K562 (cell line): ENCODE measurements at regions of chr17 and their contacts with region 1.

Region 1: GRCh38 chr17:55324296-55324978 is 59.7 kb downstream of the HLF start:
- DNase-seq: peak in 1 of 4 experiments; percentile 41
- ATAC-seq: peak; percentile 61; the same call in 2 of the 3 replicates
- H3K4me3 ChIP-seq: no peak overlapping the region
- H3K27ac ChIP-seq: no peak overlapping the region
- H3K4me1 ChIP-seq: peaks cover 4 to 14% of the 10 kb centered on the region in 2 experiments
- H3K27me3 ChIP-seq: no peaks in the 10 kb centered on the region
- CTCF ChIP-seq: peak in 2 of 3 experiments; percentile 37 to 40; a peak in 2 of 6 replicates
- EP300 ChIP-seq: no peak
- POLR2A ChIP-seq: no peak
- RAD21 ChIP-seq: peak; percentile 9 to 67; a peak in 2 of 4 replicates

Region 2: GRCh38 chr17:55081559-55081958 is 242.9 kb before region 1 on chr17:
- CTCF ChIA-PET with region 1: no interaction called
- POLR2A ChIA-PET with region 1: no interaction called
- in situ Hi-C with region 1: no loop called
- intact Hi-C with region 1: no loop called
- DNase-seq: no peak
- ATAC-seq: no peak
- H3K4me3 ChIP-seq: no peak overlapping the region
- H3K27ac ChIP-seq: no peak overlapping the region
- H3K4me1 ChIP-seq: peaks cover 0 to 2% of the 10 kb centered on the region in 2 experiments; a peak in 2 of 5 replicates
- H3K27me3 ChIP-seq: no peaks in the 10 kb centered on the region
- CTCF ChIP-seq: no peak
- EP300 ChIP-seq: no peak
- POLR2A ChIP-seq: no peak
- RAD21 ChIP-seq: no peak

Region 3: DNA sequence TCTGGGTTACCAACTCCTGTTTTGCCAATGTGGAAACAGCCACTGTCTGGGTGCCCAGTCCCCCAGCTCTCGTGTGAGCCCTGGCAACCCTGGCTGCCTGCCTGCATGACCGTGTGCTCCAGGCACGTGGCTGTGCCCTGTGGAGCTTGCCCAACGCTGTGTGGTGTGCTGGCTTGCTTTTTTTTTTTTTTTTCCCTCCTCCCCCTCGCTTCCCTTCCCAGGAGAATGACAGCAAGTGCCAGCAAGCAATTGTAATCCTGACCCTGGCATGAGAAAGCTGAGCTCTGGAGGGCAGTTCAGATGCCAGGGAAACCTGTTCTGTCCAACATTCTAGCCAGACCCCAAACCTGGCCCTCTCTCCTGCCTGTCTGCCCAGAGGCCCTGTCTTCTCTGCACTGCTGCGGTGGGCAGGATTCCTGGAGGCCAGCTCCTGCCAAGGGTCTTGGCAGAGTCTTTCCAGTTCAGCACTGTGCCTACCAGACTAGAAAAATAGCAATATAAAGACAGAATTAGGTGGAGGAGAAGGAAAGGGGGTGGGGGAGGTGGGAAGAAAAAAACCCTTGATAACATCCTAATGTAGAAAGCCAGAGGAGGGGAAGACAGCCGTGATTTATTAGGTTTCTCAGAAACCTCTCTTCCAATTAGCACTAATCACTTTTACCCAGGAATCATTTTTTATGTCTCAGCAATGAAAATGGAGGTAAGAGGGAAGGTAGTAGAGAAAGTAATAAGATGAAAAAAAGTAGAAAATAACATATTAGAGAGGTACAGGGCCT is 50.7 kb before region 1 on chr17:
- CTCF ChIA-PET with region 1: no interaction called
- POLR2A ChIA-PET with region 1: no interaction called
- in situ Hi-C with region 1: no loop called
- intact Hi-C with region 1: no loop called
- DNase-seq: no peak
- ATAC-seq: no peak
- H3K4me3 ChIP-seq: no peak overlapping the region
- H3K27ac ChIP-seq: no peak overlapping the region
- H3K4me1 ChIP-seq: 0 out of 5 replicates have a peak, but pooled peaks cover 0 to 3% of the 10 kb centered on the region in 2 experiments
- H3K27me3 ChIP-seq: peaks cover 0 to 11% of the 10 kb centered on the region in 2 experiments; a peak in 2 of 5 replicates
- CTCF ChIP-seq: no peak
- EP300 ChIP-seq: no peak
- POLR2A ChIP-seq: no peak
- RAD21 ChIP-seq: no peak

Region 4: GRCh38 chr17:55348749-55349354 is 24.4 kb after region 1 on chr17:
- CTCF ChIA-PET with region 1: no interaction called
- POLR2A ChIA-PET with region 1: interaction called, 3 read pairs
- in situ Hi-C with region 1: no loop called
- intact Hi-C with region 1: loop called (anchors 2 kb)
- DNase-seq: peak; percentile 43 to 78 (median 55)
- ATAC-seq: peak; percentile 64
- H3K4me3 ChIP-seq: no peak overlapping the region
- H3K27ac ChIP-seq: no peak overlapping the region
- H3K4me1 ChIP-seq: peaks cover 10 to 25% of the 10 kb centered on the region in 2 experiments
- H3K27me3 ChIP-seq: no peaks in the 10 kb centered on the region
- CTCF ChIP-seq: peak; percentile 81 to 92 (median 83)
- EP300 ChIP-seq: no peak
- POLR2A ChIP-seq: no peak
- RAD21 ChIP-seq: peak; percentile 92 to 93

Region 5: DNA sequence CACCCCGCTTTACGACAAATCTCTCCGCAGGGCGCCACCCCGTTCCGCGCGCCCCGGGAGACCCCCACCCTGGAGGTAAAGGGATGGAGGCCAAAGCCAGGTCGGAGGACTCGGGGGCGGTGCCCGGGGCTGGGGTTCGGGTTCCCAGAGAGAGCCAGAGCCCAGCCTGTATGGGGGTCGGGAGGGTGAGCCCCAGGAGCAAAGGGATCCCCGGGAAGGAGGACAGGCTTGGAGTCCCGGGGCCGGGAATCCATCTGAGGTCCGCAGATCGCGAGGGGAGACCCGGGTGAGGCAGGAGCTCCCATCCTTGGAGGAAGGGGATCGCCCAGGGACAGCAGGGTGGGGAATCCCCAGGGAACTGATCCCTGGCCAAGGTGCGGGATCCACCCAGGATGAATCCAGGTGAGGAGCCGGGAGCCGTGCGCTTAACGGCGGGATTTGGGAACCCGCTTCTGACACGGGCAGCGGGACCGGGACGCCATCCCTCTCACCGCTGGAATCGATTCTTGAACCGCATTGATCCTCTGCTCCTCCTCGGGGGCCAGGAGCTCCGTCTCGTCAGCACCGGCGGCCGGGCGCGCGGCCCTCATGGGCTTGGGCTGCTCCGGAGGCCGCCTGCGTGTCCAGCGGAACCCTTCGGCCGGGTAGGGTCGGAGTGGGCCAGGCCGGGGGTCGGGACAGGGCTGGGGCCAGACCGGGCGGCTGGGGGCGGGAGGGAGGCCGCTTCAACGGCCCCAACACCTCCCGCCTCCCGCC is 96.9 kb after region 1 on chr17 and contains the start of gene MMD:
- CTCF ChIA-PET with region 1: no interaction called
- POLR2A ChIA-PET with region 1: no interaction called
- in situ Hi-C with region 1: no loop called
- intact Hi-C with region 1: no loop called
- DNase-seq: peak; percentile 20 to 51 (median 45)
- ATAC-seq: peak; percentile 63
- H3K4me3 ChIP-seq: peak within 1 kb of the TSS; percentile 71
- H3K27ac ChIP-seq: peak within 1 kb of the TSS; percentile 64
- H3K4me1 ChIP-seq: peaks cover 11% of the 10 kb centered on the region in 2 experiments
- H3K27me3 ChIP-seq: no peaks in the 10 kb centered on the region
- CTCF ChIP-seq: no peak
- EP300 ChIP-seq: no peak
- POLR2A ChIP-seq: peak; percentile 62; the same call in 1 of the 2 replicates
- RAD21 ChIP-seq: no peak
- polyA plus RNA-seq, gene MMD: 3.1 to 4.0 TPM

Region 6: GRCh38 chr17:55635253-55635914 is 310.9 kb after region 1 on chr17:
- CTCF ChIA-PET with region 1: no interaction called
- POLR2A ChIA-PET with region 1: no interaction called
- in situ Hi-C with region 1: no loop called
- intact Hi-C with region 1: no loop called
- DNase-seq: no peak
- ATAC-seq: no peak
- H3K4me3 ChIP-seq: no peak overlapping the region
- H3K27ac ChIP-seq: no peak overlapping the region
- H3K4me1 ChIP-seq: peaks cover 0 to 6% of the 10 kb centered on the region in 2 experiments; a peak in 2 of 5 replicates
- H3K27me3 ChIP-seq: no peaks in the 10 kb centered on the region; a peak in 1 of 5 replicates
- CTCF ChIP-seq: no peak
- EP300 ChIP-seq: no peak
- POLR2A ChIP-seq: no peak
- RAD21 ChIP-seq: no peak